ENCODE measurements at regions of chr9 and their contacts with region 1.

Region 1: DNA sequence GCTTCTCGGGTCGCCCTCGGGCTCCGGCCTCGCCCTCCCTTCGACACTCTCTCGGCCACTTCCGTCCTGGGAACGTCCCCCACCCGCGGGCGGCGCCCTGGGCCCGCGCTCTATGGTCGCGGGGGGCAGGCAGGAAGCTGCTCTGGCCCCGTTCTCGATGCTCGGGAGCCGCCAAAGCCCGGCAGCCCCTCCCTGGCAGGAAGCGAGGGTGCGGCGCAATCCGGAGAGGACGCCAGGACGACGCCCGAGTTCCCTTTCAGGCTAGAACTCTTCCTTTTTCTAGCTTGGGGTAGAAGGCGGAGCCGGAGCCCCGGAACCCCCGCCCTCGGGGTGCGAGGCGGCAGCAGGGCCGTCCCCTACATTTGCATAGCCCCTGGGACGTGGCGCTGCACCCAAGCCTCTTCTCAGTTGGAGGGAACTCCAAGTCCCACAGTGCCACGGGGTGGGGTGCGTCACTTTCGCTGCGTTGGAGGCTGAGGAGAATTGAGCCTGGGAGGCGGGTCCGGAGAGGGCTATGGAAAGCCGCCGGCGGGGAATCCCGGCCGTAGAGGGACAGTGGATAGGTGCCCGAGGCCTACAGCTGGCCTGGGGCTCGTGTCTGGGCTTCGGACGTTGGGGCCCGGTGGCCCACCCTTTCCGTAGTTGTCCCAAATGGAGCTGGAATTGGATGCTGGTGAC is at the starts of genes CREB3 and TLN1:
- DNase-seq: peak; percentile 99
- H3K4me3 ChIP-seq: peak within 1 kb of the TSS; percentile 50 to 97 (median 86)
- H3K27ac ChIP-seq: peak within 1 kb of the TSS; percentile 78 to 94
- H3K4me1 ChIP-seq: peaks cover 40 to 62% (median 60%) of the 10 kb centered on the region in 4 experiments
- H3K27me3 ChIP-seq: no peaks in the 10 kb centered on the region

Region 2: GRCh38 chr9:35657546-35658136 is 74.6 kb before region 1 on chr9 and contains the start of gene RMRP:
- CTCF ChIA-PET with region 1: interaction called, 29 read pairs
- POLR2A ChIA-PET with region 1: interaction called, 4 read pairs
- DNase-seq: peak; percentile 95 to 99 (median 96)
- H3K4me3 ChIP-seq: peak within 1 kb of the TSS; percentile 81 to 89 (median 84)
- H3K27ac ChIP-seq: peak within 1 kb of the TSS; percentile 100
- H3K4me1 ChIP-seq: peaks cover 11 to 55% (median 40%) of the 10 kb centered on the region in 4 experiments
- H3K27me3 ChIP-seq: no peaks in the 10 kb centered on the region

Region 3: DNA sequence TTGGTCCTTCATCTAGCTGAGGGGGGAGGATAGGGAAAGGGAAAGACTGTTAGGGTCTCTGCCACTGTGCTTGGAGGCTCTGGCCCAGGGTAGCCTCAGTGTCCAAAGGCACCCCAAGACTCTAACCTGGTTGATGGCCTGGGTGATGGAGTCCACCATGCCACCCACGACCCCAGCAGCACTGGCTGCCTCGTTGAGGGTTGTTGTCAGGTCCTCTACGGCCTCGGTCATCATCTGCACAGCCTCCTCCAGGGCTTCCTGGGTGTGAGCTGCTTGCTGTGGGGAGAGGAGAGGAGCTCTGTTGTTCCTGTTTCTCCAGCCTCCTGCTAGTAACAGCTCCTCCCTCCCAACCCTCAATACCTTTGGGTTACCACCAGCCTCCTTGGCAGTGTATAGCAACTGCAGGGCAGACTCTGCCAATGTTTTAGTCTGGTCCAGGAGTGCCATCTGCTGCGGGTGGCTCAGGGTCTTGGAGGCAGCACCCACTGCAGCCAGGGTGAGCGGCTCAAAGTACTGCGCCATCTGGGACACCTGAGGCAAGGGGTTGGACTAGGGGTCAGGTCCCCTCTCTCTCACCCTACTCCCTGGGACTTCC is 26.3 kb before region 1 on chr9:
- CTCF ChIA-PET with region 1: interaction called, 94 read pairs
- POLR2A ChIA-PET with region 1: interaction called, 5 read pairs
- DNase-seq: no peak
- H3K4me3 ChIP-seq: no peak overlapping the region
- H3K27ac ChIP-seq: no peak overlapping the region
- H3K4me1 ChIP-seq: no peaks in the 10 kb centered on the region
- H3K27me3 ChIP-seq: no peaks in the 10 kb centered on the region

Region 4: GRCh38 chr9:35748858-35749514 is 16.7 kb after region 1 on chr9 and contains the starts of genes GBA2 and RGP1:
- CTCF ChIA-PET with region 1: interaction called, 190 read pairs
- POLR2A ChIA-PET with region 1: interaction called, 10 read pairs
- DNase-seq: peak; percentile 32 to 72 (median 60)
- H3K4me3 ChIP-seq: peak within 1 kb of the TSS; percentile 79 to 92 (median 86)
- H3K27ac ChIP-seq: peak within 1 kb of the TSS; percentile 18 to 84
- H3K4me1 ChIP-seq: peaks cover 10 to 39% (median 34%) of the 10 kb centered on the region in 4 experiments
- H3K27me3 ChIP-seq: no peaks in the 10 kb centered on the region

Region 5: GRCh38 chr9:35790385-35791296 is 58.4 kb after region 1 on chr9:
- CTCF ChIA-PET with region 1: interaction called, 103 read pairs
- POLR2A ChIA-PET with region 1: no interaction called
- DNase-seq: peak; percentile 68 to 80 (median 72)
- H3K4me3 ChIP-seq: peak overlapping the region in 1 of 7 experiments; percentile 35
- H3K27ac ChIP-seq: no peak overlapping the region
- H3K4me1 ChIP-seq: peaks cover 0 to 18% (median 10%) of the 10 kb centered on the region in 4 experiments
- H3K27me3 ChIP-seq: peaks cover 0 to 3% (median 0%) of the 10 kb centered on the region in 5 experiments

Region 6: GRCh38 chr9:35829084-35829763 is 97.0 kb after region 1 on chr9 and contains the start of gene TMEM8B:
- CTCF ChIA-PET with region 1: interaction called, 13 read pairs
- POLR2A ChIA-PET with region 1: interaction called, 5 read pairs
- DNase-seq: peak; percentile 92 to 93 (median 92)
- H3K4me3 ChIP-seq: peak within 1 kb of the TSS; percentile 48 to 84 (median 75)
- H3K27ac ChIP-seq: peak within 1 kb of the TSS in 1 of 2 experiments; percentile 67
- H3K4me1 ChIP-seq: peaks cover 2 to 27% (median 24%) of the 10 kb centered on the region in 4 experiments
- H3K27me3 ChIP-seq: peaks cover 0 to 6% (median 3%) of the 10 kb centered on the region in 5 experiments